ENCODE measurements at regions of chr7 and their contacts with region 1.

Region 1: DNA sequence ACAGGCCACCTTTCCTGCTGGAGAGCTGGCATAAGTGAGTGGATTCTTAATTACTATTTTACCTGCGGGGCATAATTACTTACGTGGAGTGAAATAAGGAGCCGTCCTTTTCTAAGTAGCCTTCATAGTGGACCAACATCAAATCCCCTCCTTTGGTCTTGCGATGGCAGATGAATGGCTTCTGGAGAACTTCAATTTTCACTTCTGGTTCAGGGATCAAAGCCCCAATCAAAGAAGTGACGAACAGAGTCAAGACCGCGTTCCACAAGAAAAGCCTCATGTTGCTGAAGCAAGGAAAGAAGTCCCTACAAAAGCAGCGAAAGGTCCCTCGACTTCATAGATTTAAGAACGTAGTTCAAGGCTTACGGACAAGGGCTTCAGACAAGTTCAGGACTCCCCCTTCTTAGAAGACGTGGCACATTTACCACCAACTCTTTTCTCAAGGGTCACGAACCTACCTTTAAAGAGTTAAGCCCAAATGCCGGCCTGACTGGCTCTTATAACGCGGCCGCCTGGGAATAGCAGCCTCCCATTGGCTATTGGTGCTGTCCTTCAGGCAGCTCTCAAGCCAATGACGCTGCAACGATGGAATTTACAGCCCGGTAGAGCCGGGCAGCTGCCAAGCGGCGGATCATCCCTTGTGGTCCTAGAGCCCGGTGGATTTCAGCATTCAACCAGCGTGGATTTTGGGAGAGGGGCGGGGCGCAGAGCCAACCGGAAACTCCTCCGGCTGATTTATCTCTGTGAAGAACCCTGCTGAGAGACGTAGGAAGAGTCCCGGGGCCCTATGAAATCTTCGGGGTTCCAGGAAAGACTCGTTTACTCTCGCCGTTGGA is at the start of gene FKBP14:
- DNase-seq: peak; percentile 99
- H3K4me3 ChIP-seq: peak within 1 kb of the TSS; percentile 75 to 95 (median 81)
- H3K27ac ChIP-seq: peak within 1 kb of the TSS; percentile 88 to 94 (median 92)
- H3K4me1 ChIP-seq: peaks cover 36 to 60% (median 48%) of the 10 kb centered on the region in 4 donors
- H3K27me3 ChIP-seq: no peaks in the 10 kb centered on the region
- CTCF ChIP-seq: peak in 1 of 3 experiments; percentile 33
- EP300 ChIP-seq: no peak
- POLR2A ChIP-seq: no peak
- total RNA-seq, gene FKBP14: 6.3 to 8.3 (median 7.0) TPM

Region 2: DNA sequence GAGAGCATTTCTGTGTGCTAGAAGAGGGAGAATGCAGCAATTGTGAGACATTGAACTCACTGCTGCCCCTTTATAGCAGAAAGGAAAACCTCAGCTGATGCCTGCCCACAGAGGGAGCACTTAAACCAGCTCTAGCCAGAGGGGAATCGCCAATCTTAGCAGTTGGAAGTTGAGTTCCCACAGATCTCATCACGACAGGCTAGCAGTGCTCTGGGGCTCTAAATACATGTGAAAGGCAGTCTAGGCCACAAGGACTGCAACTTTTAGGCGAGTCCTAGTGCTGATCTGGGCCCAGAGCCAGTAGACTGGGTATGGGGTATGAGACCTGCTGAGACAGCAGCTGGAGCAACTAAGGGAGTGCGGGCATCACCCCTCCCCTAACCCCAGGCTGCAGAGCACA is 488.1 kb before region 1 on chr7:
- intact Hi-C with region 1: no loop called
- DNase-seq: no peak
- H3K4me3 ChIP-seq: no peak overlapping the region
- H3K27ac ChIP-seq: no peak overlapping the region
- H3K4me1 ChIP-seq: no peaks in the 10 kb centered on the region
- H3K27me3 ChIP-seq: no peaks in the 10 kb centered on the region
- CTCF ChIP-seq: no peak
- EP300 ChIP-seq: no peak
- POLR2A ChIP-seq: no peak

Region 3: GRCh38 chr7:29988424-29989256 is 37.8 kb before region 1 on chr7:
- intact Hi-C with region 1: loop called (anchors 5 kb)
- DNase-seq: no peak
- H3K4me3 ChIP-seq: peak overlapping the region; percentile 79 to 99 (median 97)
- H3K27ac ChIP-seq: peak overlapping the region; percentile 92 to 97 (median 95)
- H3K4me1 ChIP-seq: peaks cover 8 to 38% (median 28%) of the 10 kb centered on the region in 4 donors
- H3K27me3 ChIP-seq: no peaks in the 10 kb centered on the region
- CTCF ChIP-seq: no peak
- EP300 ChIP-seq: no peak
- POLR2A ChIP-seq: no peak

Measured in esophagus muscularis mucosa (tissue), 4 donors.